ENCODE measurements at regions of chr17 and their contacts with region 1.

Region 1: GRCh38 chr17:1516388-1517161 is at the start of gene INPP5K:
- DNase-seq: peak; percentile 99
- ATAC-seq: peak; percentile 97
- H3K4me3 ChIP-seq: peak within 1 kb of the TSS; percentile 60 to 81
- H3K27ac ChIP-seq: peak within 1 kb of the TSS in 1 of 2 donors; percentile 90
- H3K4me1 ChIP-seq: no peaks in the 10 kb centered on the region
- H3K27me3 ChIP-seq: no peaks in the 10 kb centered on the region
- total RNA-seq, gene INPP5K: 35.7 to 40.7 TPM

Region 2: GRCh38 chr17:1058423-1059130 is 458.0 kb before region 1 on chr17:
- intact Hi-C with region 1: no loop called
- DNase-seq: peak in 1 of 2 donors; percentile 89
- ATAC-seq: no peak
- H3K4me3 ChIP-seq: no peak overlapping the region
- H3K27ac ChIP-seq: no peak overlapping the region
- H3K4me1 ChIP-seq: no peaks in the 10 kb centered on the region
- H3K27me3 ChIP-seq: no peaks in the 10 kb centered on the region

Region 3: GRCh38 chr17:1256699-1257098 is 259.9 kb before region 1 on chr17:
- intact Hi-C with region 1: loop called in 1 of 2 experiments (anchors 5 kb)
- DNase-seq: no peak
- ATAC-seq: no peak
- H3K4me3 ChIP-seq: no peak overlapping the region
- H3K27ac ChIP-seq: no peak overlapping the region
- H3K4me1 ChIP-seq: no peaks in the 10 kb centered on the region
- H3K27me3 ChIP-seq: no peaks in the 10 kb centered on the region

Region 4: GRCh38 chr17:1267471-1267947 is 249.1 kb before region 1 on chr17:
- intact Hi-C with region 1: loop called (anchors 5 kb)
- DNase-seq: peak in 1 of 2 donors; percentile 58
- ATAC-seq: peak; percentile 5
- H3K4me3 ChIP-seq: peak overlapping the region; percentile 78 to 92
- H3K27ac ChIP-seq: peak overlapping the region in 1 of 2 donors; percentile 98
- H3K4me1 ChIP-seq: no peaks in the 10 kb centered on the region
- H3K27me3 ChIP-seq: no peaks in the 10 kb centered on the region

Region 5: DNA sequence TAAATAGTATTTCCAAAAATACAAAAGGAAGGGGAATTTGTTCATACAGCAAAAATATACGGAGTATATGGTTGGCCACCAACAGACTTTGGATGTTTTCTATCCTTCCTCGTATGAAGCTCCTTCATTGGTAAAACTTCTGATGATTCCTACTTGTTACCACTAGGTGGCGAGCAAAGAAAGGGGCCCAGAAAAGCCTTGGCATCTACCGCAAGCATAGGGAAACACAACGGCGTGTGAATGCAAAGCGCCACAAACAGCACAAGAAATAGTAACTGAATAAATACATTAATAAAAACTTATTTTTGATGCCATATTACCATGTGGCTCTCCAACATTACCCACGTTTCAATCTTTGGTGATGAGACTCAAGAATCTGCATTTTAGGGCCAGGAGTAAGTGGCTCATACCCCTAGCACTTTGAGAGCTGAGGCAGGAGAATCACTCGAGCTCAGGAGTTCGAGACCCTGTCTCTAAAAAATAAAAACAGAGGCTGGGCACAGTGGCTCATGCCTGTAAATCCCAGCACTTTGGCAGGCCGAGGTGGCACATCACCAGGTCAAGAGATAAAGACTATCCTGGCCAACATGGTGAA is 151.0 kb before region 1 on chr17:
- intact Hi-C with region 1: loop called (anchors 5 kb)
- DNase-seq: peak in 1 of 2 donors; percentile 61
- ATAC-seq: peak; percentile 89
- H3K4me3 ChIP-seq: no peak overlapping the region
- H3K27ac ChIP-seq: no peak overlapping the region
- H3K4me1 ChIP-seq: peaks cover under 1 to 5% of the 10 kb centered on the region in 2 donors
- H3K27me3 ChIP-seq: no peaks in the 10 kb centered on the region

Region 6: GRCh38 chr17:1399679-1400512 is 116.7 kb before region 1 on chr17 and contains the start of gene YWHAE:
- intact Hi-C with region 1: loop called in 1 of 2 experiments (anchors 10 kb)
- DNase-seq: peak; percentile 98 to 99
- ATAC-seq: peak; percentile 98
- H3K4me3 ChIP-seq: peak within 1 kb of the TSS; percentile 78 to 87
- H3K27ac ChIP-seq: peak within 1 kb of the TSS; percentile 32 to 81
- H3K4me1 ChIP-seq: peaks cover 0 to 6% of the 10 kb centered on the region in 2 donors
- H3K27me3 ChIP-seq: no peaks in the 10 kb centered on the region
- total RNA-seq, gene YWHAE: 277 to 285 TPM

Region 7: GRCh38 chr17:1455797-1456599 is 60.6 kb before region 1 on chr17 and contains the start of gene CRK:
- intact Hi-C with region 1: loop called (anchors 2 to 5 kb)
- DNase-seq: peak; percentile 98 to 99
- ATAC-seq: peak; percentile 98
- H3K4me3 ChIP-seq: peak within 1 kb of the TSS; percentile 74 to 90
- H3K27ac ChIP-seq: peak within 1 kb of the TSS; percentile 73 to 90
- H3K4me1 ChIP-seq: peaks cover 3 to 4% of the 10 kb centered on the region in 2 donors
- H3K27me3 ChIP-seq: no peaks in the 10 kb centered on the region
- total RNA-seq, gene CRK: 55.3 to 63.8 TPM

Region 8: GRCh38 chr17:1490643-1491442 is 25.7 kb before region 1 on chr17:
- intact Hi-C with region 1: loop called in 1 of 2 experiments (anchors 2 kb)
- DNase-seq: peak; percentile 83 to 93
- ATAC-seq: no peak
- H3K4me3 ChIP-seq: peak overlapping the region; percentile 59 to 80
- H3K27ac ChIP-seq: peak overlapping the region; percentile 72 to 90
- H3K4me1 ChIP-seq: peaks cover 0 to 3% of the 10 kb centered on the region in 2 donors
- H3K27me3 ChIP-seq: no peaks in the 10 kb centered on the region

Region 9: GRCh38 chr17:1628856-1629646 is 112.5 kb after region 1 on chr17:
- intact Hi-C with region 1: no loop called
- DNase-seq: peak; percentile 97
- ATAC-seq: peak; percentile 94
- H3K4me3 ChIP-seq: peak overlapping the region; percentile 33 to 81
- H3K27ac ChIP-seq: no peak overlapping the region
- H3K4me1 ChIP-seq: no peaks in the 10 kb centered on the region
- H3K27me3 ChIP-seq: no peaks in the 10 kb centered on the region

Measured in aorta (tissue), 5 donors.